Left ventricle myocardium superior (tissue), 1 donor: ENCODE measurements at regions of chr7 and their contacts with region 1.

Region 1: DNA sequence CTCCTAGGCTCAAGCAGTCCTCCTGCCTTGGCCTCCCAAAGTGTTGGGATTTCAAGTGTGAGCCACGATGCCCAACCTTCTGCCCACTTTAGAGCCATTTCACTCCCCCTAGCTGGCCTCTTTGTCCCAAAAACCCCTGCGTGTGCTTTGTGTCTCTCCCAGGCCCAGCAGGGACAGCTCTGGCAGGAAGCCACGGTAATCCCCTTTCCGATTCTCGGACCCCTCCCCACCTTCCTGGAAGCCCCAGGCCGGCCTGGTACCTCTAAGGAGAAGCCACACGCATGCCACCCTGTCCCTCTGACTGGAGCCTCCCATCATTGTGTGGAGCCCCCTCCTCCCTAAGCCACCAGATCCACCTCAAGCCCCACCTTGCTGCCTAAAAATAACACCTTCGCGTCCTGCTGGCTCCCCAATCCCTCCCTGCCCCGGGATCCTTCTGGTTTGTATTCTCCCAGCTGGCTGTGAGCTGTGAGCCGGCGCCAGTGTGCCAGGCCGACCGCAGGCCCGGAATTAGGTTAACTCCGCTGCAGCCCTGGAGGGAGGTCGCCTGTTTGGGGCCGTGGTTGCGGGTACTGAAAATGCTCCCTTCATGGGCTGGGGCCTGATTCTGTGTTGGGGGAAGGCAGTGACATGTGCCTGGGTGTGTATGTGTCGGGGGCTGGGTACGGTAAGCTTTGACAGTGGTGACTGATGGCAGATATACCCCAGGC is 16.4 kb upstream of the SRRM3 start:
- DNase-seq: no peak
- ATAC-seq: no peak

Region 2: DNA sequence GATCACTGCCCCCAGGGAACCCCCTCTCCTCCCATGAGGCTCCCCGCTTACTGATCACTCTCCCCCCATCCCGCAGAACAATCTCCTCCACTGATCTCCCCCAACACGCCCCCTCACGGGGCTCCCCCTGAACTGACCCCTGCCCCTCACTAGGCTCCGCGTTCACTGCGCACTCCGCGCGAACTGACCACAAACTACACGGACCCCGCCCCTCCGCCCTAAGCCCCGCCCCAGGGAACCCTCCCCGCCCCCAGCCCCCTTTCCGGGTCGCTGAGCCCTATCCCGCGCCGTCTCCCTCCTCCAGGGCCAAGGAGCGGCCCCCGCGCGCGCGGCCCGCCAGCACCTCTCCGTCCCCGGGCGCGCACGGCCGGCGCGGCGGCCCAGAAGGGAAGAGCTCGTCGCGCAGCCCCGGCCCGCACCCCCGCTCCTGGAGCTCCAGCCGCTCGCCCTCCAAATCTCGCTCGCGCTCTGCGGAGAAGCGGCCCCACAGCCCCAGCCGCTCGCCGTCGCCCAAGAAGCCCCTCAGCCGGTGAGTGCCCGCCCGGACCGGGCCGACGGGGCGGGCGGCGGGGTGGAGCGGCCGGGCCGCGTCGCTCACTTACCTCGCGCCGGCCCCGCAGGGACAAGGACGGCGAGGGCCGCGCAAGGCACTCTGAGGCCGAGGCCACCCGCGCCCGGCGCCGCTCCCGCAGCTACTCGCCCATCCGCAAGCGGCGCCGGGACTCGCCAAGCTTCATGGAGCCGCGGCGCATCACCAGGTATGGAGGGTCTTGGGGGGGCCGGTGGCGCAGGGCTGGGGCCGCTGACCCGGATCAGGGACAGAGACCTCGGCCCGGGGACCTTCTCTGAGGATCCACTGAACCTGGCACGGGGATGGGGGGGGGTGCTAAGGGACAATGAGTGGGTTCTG is 97.3 kb after region 1 on chr7:
- intact Hi-C with region 1: loop called (anchors 10 kb)
- DNase-seq: peak; percentile 71
- ATAC-seq: peak; percentile 77